ENCODE measurements at regions of chr11 and their contacts with region 1.

Region 1: GRCh38 chr11:33987975-33988580 is 63.5 kb upstream of the CAPRIN1 start:
- DNase-seq: peak; percentile 73
- CTCF ChIP-seq: peak; percentile 83

Region 2: GRCh38 chr11:33500861-33501479 is 487.1 kb before region 1 on chr11:
- CTCF ChIA-PET with region 1: no interaction called
- POLR2A ChIA-PET with region 1: no interaction called
- DNase-seq: no peak
- CTCF ChIP-seq: no peak

Region 3: GRCh38 chr11:33835143-33835878 is 152.8 kb before region 1 on chr11:
- CTCF ChIA-PET with region 1: interaction called, 21 read pairs
- POLR2A ChIA-PET with region 1: no interaction called
- DNase-seq: no peak
- CTCF ChIP-seq: no peak

Region 4: GRCh38 chr11:33848717-33849390 is 139.2 kb before region 1 on chr11:
- CTCF ChIA-PET with region 1: interaction called, 16 read pairs
- POLR2A ChIA-PET with region 1: no interaction called
- DNase-seq: no peak
- CTCF ChIP-seq: no peak

Region 5: GRCh38 chr11:33863418-33864172 is 124.5 kb before region 1 on chr11:
- CTCF ChIA-PET with region 1: interaction called, 50 read pairs
- POLR2A ChIA-PET with region 1: no interaction called
- DNase-seq: no peak
- CTCF ChIP-seq: no peak

Region 6: GRCh38 chr11:33976495-33977199 is 11.4 kb before region 1 on chr11:
- CTCF ChIA-PET with region 1: interaction called, 36 read pairs
- POLR2A ChIA-PET with region 1: interaction called, 6 read pairs
- DNase-seq: no peak
- CTCF ChIP-seq: no peak

Measured in GM10248 (cell line).